ENCODE measurements at regions of chr16 and their contacts with region 1.

Region 1: DNA sequence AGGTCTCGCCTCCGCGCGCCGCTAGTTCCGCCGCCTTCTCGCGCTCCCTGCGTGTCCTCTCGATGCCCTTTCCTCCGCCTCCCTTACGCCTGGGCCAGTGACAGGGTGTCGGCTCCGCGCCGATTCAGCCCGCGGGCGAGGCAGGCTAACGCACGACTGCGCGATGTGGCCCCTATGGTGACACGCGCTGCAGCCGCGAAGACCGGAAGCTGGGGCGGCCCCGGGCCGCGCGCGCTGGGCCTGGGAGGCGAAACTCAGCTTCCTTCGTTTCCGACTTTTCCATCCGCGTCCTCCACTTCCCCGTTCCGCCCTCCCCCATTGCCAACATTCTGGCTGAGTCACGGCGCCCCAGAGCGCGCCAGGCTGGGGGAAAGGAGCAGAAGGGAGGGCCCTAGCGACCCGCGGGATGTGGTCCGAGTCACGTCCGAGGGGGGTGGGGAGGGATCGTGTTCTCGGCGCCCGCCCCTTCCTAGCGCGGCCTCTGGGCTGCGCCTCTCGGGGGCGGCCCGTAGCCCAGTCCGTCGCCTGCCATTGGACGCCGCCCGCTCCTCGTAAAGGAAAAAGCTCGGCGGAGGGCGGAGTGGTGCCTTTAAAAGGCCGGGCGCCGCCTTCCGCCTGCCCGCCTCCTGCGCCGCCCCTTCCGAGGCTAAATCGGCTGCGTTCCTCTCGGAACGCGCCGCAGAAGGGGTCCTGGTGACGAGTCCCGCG is at the start of gene ALDOA:
- DNase-seq: peak in 1 of 2 donors; percentile 98
- H3K4me3 ChIP-seq: peak within 1 kb of the TSS; percentile 90 to 100
- H3K27ac ChIP-seq: peak within 1 kb of the TSS; percentile 99
- H3K4me1 ChIP-seq: peaks cover 65% of the 10 kb centered on the region
- H3K27me3 ChIP-seq: no peaks in the 10 kb centered on the region
- CTCF ChIP-seq: peak in 1 of 3 experiments; percentile 5
- POLR2A ChIP-seq: peak in 1 of 2 donors; percentile 30
- total RNA-seq, gene ALDOA: 810 TPM

Region 2: GRCh38 chr16:29811170-29811895 is 254.0 kb before region 1 on chr16:
- intact Hi-C with region 1: loop called (anchors 5 kb)
- DNase-seq: no peak
- H3K4me3 ChIP-seq: peak overlapping the region; percentile 57 to 74
- H3K27ac ChIP-seq: peak overlapping the region; percentile 96
- H3K4me1 ChIP-seq: peaks cover 81% of the 10 kb centered on the region
- H3K27me3 ChIP-seq: no peaks in the 10 kb centered on the region
- CTCF ChIP-seq: no peak
- POLR2A ChIP-seq: peak in 1 of 2 donors; percentile 42

Region 3: DNA sequence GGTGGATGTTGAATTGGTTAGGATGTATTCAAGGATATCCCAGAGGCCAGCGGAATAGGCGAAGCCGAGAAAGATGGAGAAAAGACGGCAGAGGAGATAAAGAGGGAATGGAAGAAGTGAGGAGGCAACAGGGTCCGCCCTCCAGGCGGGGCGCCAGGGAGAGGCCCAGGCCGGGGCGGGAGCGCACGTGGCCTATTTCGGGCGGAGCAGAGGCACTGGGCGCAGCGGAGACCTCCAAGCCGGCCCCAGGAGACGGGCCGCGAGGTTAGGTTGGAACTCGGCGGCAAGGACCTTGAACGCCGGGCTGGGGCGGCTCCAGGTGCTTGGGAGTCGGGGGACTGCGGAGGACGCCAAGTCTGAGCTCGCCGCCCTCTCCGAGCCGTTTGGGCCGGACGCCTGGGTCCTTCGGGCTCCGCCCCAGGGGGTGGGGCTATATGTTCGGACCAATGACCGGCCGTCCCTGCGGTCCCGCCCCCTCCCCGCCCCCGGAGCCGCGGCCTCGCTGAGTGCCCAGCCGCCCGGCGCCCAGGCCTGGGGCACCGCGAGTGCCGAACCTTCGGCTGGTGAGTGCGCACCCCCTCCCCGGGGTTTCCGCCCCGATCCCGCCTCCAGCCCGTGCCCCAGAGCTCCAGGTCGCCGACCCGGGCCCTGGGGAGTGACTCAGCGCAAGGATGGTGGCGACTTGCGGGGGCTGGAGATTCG is 342.0 kb after region 1 on chr16 and contains the start of gene ZNF771:
- intact Hi-C with region 1: loop called (anchors 10 kb)
- DNase-seq: no peak
- H3K4me3 ChIP-seq: peak within 1 kb of the TSS; percentile 73 to 74
- H3K27ac ChIP-seq: peak within 1 kb of the TSS; percentile 79
- H3K4me1 ChIP-seq: peaks cover 28% of the 10 kb centered on the region
- H3K27me3 ChIP-seq: no peaks in the 10 kb centered on the region
- CTCF ChIP-seq: no peak
- POLR2A ChIP-seq: peak in 1 of 2 donors; percentile 27
- total RNA-seq, gene ZNF771: 42.7 TPM